ENCODE measurements at regions of chr3 and their contacts with region 1.

Region 1: DNA sequence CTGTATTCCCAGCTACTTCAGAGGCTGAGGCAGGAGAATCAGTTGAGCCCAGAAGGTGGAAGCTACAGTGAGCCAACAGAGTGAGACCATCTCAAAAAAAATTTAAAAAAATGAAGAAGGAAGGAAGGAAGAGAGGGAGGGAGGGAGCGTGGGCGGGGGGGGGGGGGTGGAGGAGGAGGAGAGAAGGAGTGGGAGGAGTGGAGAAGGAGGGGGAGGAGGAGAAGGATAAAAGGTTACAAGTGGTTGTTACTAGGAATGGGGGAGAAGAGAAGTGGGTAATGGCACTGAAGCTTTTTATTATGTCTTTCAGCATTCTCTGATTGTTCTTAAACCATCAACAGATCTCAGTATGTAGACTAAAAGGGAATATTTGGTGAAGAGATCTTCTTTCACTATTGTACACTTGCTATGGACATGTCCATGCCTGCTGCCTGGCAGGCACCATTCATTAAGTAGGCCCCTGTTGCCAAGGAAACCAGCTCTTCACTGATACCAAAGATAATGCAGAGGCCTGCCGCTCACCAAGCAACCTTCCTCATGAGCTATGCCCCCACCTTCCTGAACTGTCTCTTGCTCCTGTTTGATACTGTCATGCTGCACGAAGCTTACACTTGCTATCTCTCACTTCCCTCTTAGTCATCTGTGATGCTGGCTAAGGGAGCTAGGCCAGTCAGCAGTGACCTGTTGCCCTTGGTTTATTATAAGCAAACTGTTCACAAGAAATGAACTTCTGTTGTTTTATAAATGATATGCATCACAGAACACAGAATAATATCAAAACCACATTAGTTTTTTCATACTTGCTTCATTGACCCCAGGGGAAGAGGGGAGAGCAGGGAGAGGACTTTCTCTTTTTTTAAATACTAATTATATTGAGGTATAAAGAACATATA is 23.1 kb downstream of the EPM2AIP1 start:
- DNase-seq: peak; percentile 96
- H3K4me3 ChIP-seq: no peak overlapping the region
- H3K27ac ChIP-seq: peak overlapping the region; percentile 78
- H3K4me1 ChIP-seq: peaks cover 19% of the 10 kb centered on the region
- H3K27me3 ChIP-seq: no peaks in the 10 kb centered on the region
- CTCF ChIP-seq: no peak

Region 2: DNA sequence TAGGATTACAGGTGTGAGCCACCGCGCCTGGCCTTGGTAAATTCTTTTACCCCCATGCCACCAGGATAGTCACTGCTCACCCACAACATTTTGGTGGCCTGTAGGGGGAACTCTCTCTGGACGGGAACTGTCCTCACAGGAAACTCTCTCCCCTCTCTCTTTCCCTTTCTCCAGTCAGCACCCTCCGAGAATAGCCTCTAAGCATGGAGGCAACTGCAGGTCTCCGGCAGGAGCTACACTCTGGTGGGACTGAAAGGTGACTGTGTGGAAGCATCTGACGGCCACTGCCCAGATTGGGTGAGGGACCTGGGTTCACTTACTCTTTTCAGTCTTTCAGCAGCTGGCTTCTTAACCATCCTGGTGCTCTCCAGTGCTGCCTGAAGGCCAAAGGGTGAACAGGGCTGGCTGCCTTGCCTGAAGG is 46.3 kb before region 1 on chr3:
- CTCF ChIA-PET with region 1: no interaction called
- dilution Hi-C with region 1: loop called (anchors 5 kb)
- in situ Hi-C with region 1: no loop called
- intact Hi-C with region 1: no loop called
- DNase-seq: no peak
- H3K4me3 ChIP-seq: no peak overlapping the region
- H3K27ac ChIP-seq: no peak overlapping the region
- H3K4me1 ChIP-seq: no peaks in the 10 kb centered on the region
- H3K27me3 ChIP-seq: no peaks in the 10 kb centered on the region
- CTCF ChIP-seq: peak; percentile 4 to 20

Region 3: DNA sequence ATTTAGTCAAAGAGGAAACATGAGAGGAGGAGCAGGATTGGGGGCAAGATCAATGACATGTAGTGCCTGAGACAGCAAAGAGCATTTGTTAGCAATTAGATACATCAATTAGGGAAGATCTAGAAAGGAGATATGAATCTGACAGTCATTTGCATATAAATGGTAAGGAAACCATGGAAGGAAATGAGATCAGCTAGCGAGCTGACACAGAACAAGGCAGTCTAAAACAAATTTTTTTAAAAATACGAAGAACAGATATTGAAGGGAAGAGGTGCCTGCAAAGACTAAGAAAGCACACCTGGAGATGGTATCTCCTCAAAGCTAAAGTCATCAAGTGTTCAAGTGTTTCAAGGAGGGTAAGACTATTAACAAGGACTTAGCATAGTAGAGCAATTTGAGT is 18.6 kb after region 1 on chr3:
- CTCF ChIA-PET with region 1: interaction called, 4 read pairs
- dilution Hi-C with region 1: no loop called
- in situ Hi-C with region 1: no loop called
- intact Hi-C with region 1: loop called (anchors 2 kb)
- DNase-seq: no peak
- H3K4me3 ChIP-seq: no peak overlapping the region
- H3K27ac ChIP-seq: no peak overlapping the region
- H3K4me1 ChIP-seq: peaks cover 19% of the 10 kb centered on the region
- H3K27me3 ChIP-seq: no peaks in the 10 kb centered on the region
- CTCF ChIP-seq: no peak

Region 4: DNA sequence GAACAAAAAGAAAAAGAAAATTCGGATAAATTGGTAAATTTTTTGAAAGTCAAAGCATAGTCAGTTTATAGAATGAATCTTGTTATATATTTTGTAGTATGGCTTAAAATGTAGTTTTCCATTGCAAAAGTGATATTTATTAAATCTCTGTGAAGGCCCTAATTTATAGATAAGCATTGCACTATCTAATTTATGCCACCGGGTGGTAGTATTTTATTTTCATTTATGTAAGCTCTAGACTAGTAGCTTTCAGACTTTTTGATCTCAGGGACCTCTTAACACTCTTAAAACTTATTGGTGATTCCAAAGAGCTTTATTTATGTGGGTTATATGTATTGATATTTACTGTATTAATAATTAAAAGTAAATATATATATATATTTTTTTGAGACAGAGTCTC is 338.5 kb after region 1 on chr3:
- CTCF ChIA-PET with region 1: no interaction called
- dilution Hi-C with region 1: no loop called
- in situ Hi-C with region 1: no loop called
- intact Hi-C with region 1: no loop called
- DNase-seq: peak; percentile 11
- H3K4me3 ChIP-seq: no peak overlapping the region
- H3K27ac ChIP-seq: no peak overlapping the region
- H3K4me1 ChIP-seq: no peaks in the 10 kb centered on the region
- H3K27me3 ChIP-seq: no peaks in the 10 kb centered on the region
- CTCF ChIP-seq: peak in 1 of 2 donors; percentile 21